ENCODE measurements at regions of chr2 and their contacts with region 1.

Region 1: GRCh38 chr2:64562148-64562784 is 38.1 kb downstream of the AFTPH start:
- DNase-seq: peak in 2 of 9 experiments; percentile 46 to 61
- ATAC-seq: peak; percentile 78
- H3K4me3 ChIP-seq: no peak overlapping the region
- H3K4me3 Mint-ChIP-seq: no peak overlapping the region
- H3K27ac ChIP-seq: no peak overlapping the region
- H3K27ac Mint-ChIP-seq: no peak overlapping the region
- H3K4me1 ChIP-seq: peaks cover 14% of the 10 kb centered on the region
- H3K4me1 Mint-ChIP-seq: peaks cover 30% of the 10 kb centered on the region
- H3K27me3 ChIP-seq: no peaks in the 10 kb centered on the region
- H3K27me3 Mint-ChIP-seq: no peaks in the 10 kb centered on the region
- CTCF ChIP-seq: peak; percentile 58

Region 2: GRCh38 chr2:63698825-63699548 is 863.3 kb before region 1 on chr2:
- CTCF ChIA-PET with region 1: no interaction called
- POLR2A ChIA-PET with region 1: no interaction called
- intact Hi-C with region 1: loop called in 1 of 2 experiments (anchors 10 kb)
- DNase-seq: peak in 3 of 9 experiments; percentile 12 to 52 (median 39)
- ATAC-seq: peak; percentile 69
- H3K4me3 ChIP-seq: no peak overlapping the region
- H3K4me3 Mint-ChIP-seq: no peak overlapping the region
- H3K27ac ChIP-seq: no peak overlapping the region
- H3K27ac Mint-ChIP-seq: no peak overlapping the region
- H3K4me1 ChIP-seq: no peaks in the 10 kb centered on the region
- H3K4me1 Mint-ChIP-seq: no peaks in the 10 kb centered on the region
- H3K27me3 ChIP-seq: no peaks in the 10 kb centered on the region
- H3K27me3 Mint-ChIP-seq: no peaks in the 10 kb centered on the region
- CTCF ChIP-seq: peak; percentile 34

Measured in CD8-positive, alpha-beta T cell (primary cell).